ENCODE measurements at regions of chr15 and their contacts with region 1.

Region 1: DNA sequence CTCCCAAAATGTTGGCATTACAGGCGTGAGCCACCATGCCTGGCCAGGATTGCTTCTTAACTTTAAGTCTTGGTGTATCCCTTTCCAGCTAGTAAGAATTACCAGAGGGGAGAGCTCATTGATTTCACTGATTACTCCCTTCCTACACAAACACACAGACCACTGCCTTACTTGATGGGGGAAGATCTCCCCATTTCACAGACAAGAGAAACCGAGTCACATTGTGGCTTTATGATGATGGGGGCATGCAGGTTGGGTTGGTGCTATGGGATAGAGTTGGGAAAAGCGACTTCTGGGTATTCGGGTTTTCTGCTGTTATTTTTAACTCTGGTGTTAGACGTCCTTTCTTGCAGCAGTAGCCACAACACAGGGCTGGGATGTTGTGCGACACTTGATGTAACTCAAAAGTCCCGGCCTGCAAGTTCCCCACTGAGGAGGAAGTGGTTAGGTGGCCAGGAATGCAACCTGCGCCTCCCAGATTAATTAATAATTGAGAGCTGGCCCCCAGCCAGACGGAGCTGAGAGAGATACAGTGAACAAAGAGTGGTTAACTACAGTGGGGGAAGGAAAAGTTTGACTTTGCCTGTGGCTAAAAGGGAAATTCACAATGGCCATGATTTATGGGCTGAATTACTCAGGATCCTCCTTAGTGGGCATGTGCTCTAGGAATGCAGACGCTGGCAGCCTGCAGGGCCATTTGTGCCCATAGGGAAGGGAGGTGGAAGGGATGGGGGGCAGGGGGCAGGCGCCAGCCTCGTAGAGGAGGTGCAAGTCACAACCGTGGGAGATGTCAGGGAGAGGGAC is 63.6 kb downstream of the SMAD6 start:
- DNase-seq: no peak
- ATAC-seq: no peak
- H3K4me3 ChIP-seq: no peak overlapping the region
- H3K27ac ChIP-seq: no peak overlapping the region
- H3K4me1 ChIP-seq: peaks cover 13 to 17% of the 10 kb centered on the region in 2 donors
- H3K27me3 ChIP-seq: no peaks in the 10 kb centered on the region
- CTCF ChIP-seq: no peak
- POLR2A ChIP-seq: no peak

Region 2: GRCh38 chr15:66603301-66604179 is 162.1 kb before region 1 on chr15:
- in situ Hi-C with region 1: loop called in 1 of 4 experiments (anchors 5 kb)
- intact Hi-C with region 1: no loop called
- DNase-seq: no peak
- ATAC-seq: no peak
- H3K4me3 ChIP-seq: no peak overlapping the region
- H3K27ac ChIP-seq: no peak overlapping the region
- H3K4me1 ChIP-seq: no peaks in the 10 kb centered on the region
- H3K27me3 ChIP-seq: peaks cover 0 to 4% (median 0%) of the 10 kb centered on the region in 3 donors
- CTCF ChIP-seq: peak; percentile 34 to 72 (median 63)
- POLR2A ChIP-seq: no peak